ENCODE measurements at regions of chr10 and their contacts with region 1.

Region 1: GRCh38 chr10:37067576-37067975 is 57.8 kb upstream of the ANKRD30A start:
- DNase-seq: no peak
- H3K4me3 ChIP-seq: no peak overlapping the region
- H3K4me3 Mint-ChIP-seq: no peak overlapping the region
- H3K27ac Mint-ChIP-seq: no peak overlapping the region
- H3K4me1 ChIP-seq: peaks cover 31% of the 10 kb centered on the region
- H3K4me1 Mint-ChIP-seq: peaks cover 21% of the 10 kb centered on the region
- H3K27me3 ChIP-seq: no peaks in the 10 kb centered on the region
- H3K27me3 Mint-ChIP-seq: no peaks in the 10 kb centered on the region
- CTCF ChIP-seq: no peak

Region 2: DNA sequence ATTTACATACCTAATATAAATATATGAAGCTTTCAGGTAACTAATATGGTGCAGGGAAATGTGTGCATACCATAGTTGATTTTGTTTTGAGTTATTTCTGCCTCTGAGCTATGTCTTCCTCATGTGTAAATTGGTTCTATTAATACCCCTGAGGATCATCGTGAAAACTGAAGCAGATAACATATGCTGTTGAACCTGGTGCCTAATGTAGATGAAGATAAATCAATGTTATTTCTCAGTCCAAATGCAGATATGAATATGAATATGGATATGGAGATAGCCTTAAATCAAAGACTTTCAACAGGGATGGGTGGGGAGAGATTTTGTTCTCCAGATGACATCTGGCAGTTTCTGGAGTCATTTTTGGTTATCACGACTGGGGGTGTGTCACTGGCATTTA is 64.5 kb before region 1 on chr10:
- CTCF ChIA-PET with region 1: no interaction called
- POLR2A ChIA-PET with region 1: no interaction called
- intact Hi-C with region 1: loop called (anchors 1 kb)
- DNase-seq: no peak
- H3K4me3 ChIP-seq: no peak overlapping the region
- H3K4me3 Mint-ChIP-seq: no peak overlapping the region
- H3K27ac Mint-ChIP-seq: no peak overlapping the region
- H3K4me1 ChIP-seq: peaks cover 36% of the 10 kb centered on the region
- H3K4me1 Mint-ChIP-seq: peaks cover 30% of the 10 kb centered on the region
- H3K27me3 ChIP-seq: no peaks in the 10 kb centered on the region
- H3K27me3 Mint-ChIP-seq: no peaks in the 10 kb centered on the region
- CTCF ChIP-seq: no peak

Measured in Caco-2 (cell line).